Activated B cell treated with CpG ODN at 0.5 μM for 24 hours (primary cell): ENCODE measurements at regions of chr6 and their contacts with region 1.

Region 1: GRCh38 chr6:167141667-167142432 is 15.9 kb downstream of the GPR31 start:
- DNase-seq: peak; percentile 62
- ATAC-seq: peak; percentile 73
- H3K4me3 Mint-ChIP-seq: peak overlapping the region; percentile 46
- H3K27ac Mint-ChIP-seq: peak overlapping the region; percentile 79
- H3K4me1 Mint-ChIP-seq: peaks cover 61% of the 10 kb centered on the region
- H3K27me3 Mint-ChIP-seq: no peaks in the 10 kb centered on the region
- CTCF ChIP-seq: no peak

Region 2: DNA sequence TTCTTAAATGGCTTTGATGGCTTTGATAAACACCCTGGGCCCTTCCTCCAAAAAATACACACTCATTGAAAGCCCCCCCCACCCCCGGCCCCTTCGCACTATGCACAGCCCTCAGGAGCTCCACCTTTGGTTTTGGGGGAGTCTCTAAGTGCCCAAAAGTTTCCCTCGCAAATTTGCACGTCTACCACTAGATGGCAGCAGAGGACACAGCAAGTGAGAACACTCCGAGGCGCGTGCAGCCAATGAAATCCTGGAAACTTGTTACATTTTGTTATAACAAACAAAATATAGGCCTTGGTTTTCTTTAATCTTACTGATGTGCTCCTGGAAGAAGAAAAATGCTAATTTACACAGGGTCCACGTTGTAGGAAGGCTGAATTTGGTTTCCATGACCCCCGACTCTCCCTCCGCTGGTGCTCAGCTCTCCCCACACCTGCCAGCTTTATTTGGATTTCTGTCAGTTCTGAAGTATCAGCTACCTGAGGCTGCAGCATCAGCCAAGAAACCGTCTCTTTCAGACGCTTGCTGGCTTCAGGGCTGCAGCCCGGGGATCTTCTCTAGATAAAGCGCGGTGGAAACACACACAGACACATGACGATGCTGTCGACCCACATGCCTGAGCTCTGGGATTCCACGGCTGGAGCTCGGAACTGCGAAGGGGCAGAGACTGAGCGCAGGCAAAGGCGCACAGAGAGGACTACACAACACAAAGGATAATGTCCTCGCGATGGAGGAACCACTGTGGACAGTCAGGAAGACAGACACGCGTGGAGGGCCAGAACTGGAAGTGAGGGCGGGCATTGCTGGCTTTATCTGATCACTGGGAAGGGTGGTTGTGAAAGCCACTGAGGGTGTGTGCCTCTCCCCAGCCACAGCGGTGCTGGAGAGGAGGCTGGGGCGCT is 366.4 kb before region 1 on chr6:
- CTCF ChIA-PET with region 1: interaction called, 43 read pairs
- POLR2A ChIA-PET with region 1: no interaction called
- intact Hi-C with region 1: loop called (anchors 1 kb)
- DNase-seq: no peak
- ATAC-seq: peak; percentile 60
- H3K4me3 Mint-ChIP-seq: no peak overlapping the region
- H3K27ac Mint-ChIP-seq: no peak overlapping the region
- H3K4me1 Mint-ChIP-seq: no peaks in the 10 kb centered on the region
- H3K27me3 Mint-ChIP-seq: peaks cover 13% of the 10 kb centered on the region
- CTCF ChIP-seq: peak; percentile 45

Region 3: DNA sequence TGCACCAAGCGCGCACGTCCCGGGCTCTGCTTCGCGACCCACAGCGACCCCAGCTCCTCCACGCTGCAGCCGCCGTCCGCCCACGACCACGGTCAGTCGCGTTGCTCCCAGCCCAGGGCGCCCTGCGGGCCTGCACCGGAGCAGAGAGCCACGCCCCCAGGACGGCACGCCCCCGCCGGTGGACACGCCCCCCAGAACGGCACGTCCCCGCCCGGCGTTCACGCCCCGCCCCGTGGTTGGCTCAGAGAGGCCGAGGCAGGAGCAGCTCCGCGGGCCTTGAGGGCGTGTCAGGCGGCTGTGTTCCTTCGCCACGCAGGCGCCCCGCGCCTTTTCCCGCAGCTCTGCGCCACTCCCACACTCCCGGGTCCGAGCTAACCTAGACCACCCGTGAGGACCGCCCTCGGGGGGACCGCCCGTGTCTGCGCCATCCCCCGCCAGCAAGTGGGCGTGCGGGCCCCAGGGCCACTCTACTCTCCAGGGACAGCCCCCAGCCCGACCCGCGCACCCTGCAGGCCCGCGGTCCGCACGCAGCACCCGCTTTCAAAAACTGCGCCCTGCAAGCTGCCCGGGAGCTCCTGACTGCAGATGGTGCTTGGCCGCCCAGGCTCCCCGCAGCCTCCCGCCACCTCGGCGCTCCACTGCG is 185.3 kb before region 1 on chr6 and contains the start of gene RNASET2:
- CTCF ChIA-PET with region 1: interaction called, 10 read pairs
- POLR2A ChIA-PET with region 1: interaction called, 8 read pairs
- intact Hi-C with region 1: loop called (anchors 1 kb)
- DNase-seq: peak; percentile 100
- ATAC-seq: peak; percentile 82
- H3K4me3 Mint-ChIP-seq: peak within 1 kb of the TSS; percentile 91
- H3K27ac Mint-ChIP-seq: peak within 1 kb of the TSS; percentile 100
- H3K4me1 Mint-ChIP-seq: peaks cover 76% of the 10 kb centered on the region
- H3K27me3 Mint-ChIP-seq: no peaks in the 10 kb centered on the region
- CTCF ChIP-seq: no peak
- total RNA-seq, gene RNASET2: 118 and 135 TPM in 2 replicates

Region 4: DNA sequence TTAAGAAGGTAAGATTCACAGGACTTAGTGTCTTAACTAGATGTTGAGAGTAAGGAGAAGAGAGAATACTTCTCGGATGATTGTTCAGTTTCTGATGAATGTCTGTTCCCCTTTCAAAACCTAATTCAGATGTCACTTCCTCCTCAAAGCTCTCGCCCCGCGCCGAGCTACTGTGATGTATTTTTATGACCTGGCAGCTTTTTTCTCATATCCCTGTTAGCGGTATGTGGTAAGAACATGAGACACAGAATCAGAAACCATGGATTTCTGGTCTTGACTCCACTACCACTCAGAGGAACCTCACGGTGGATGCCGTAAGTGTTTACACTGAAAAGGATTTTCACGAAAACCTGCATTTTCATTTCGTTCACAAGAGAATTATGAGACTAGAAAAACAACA is 94.3 kb before region 1 on chr6:
- CTCF ChIA-PET with region 1: interaction called, 23 read pairs
- POLR2A ChIA-PET with region 1: interaction called, 3 read pairs
- intact Hi-C with region 1: no loop called
- DNase-seq: peak; percentile 36
- ATAC-seq: peak; percentile 85
- H3K4me3 Mint-ChIP-seq: peak overlapping the region; percentile 76
- H3K27ac Mint-ChIP-seq: peak overlapping the region; percentile 96
- H3K4me1 Mint-ChIP-seq: peaks cover 68% of the 10 kb centered on the region
- H3K27me3 Mint-ChIP-seq: no peaks in the 10 kb centered on the region
- CTCF ChIP-seq: no peak

Region 5: GRCh38 chr6:167113935-167114910 is 27.6 kb before region 1 on chr6:
- CTCF ChIA-PET with region 1: interaction called, 105 read pairs
- POLR2A ChIA-PET with region 1: interaction called, 688 read pairs
- intact Hi-C with region 1: loop called (anchors 1 kb)
- DNase-seq: peak; percentile 75
- ATAC-seq: peak; percentile 78
- H3K4me3 Mint-ChIP-seq: peak overlapping the region; percentile 84
- H3K27ac Mint-ChIP-seq: peak overlapping the region; percentile 94
- H3K4me1 Mint-ChIP-seq: peaks cover 96% of the 10 kb centered on the region
- H3K27me3 Mint-ChIP-seq: no peaks in the 10 kb centered on the region
- CTCF ChIP-seq: no peak

Region 6: GRCh38 chr6:167130008-167130677 is 11.7 kb before region 1 on chr6:
- CTCF ChIA-PET with region 1: interaction called, 105 read pairs
- POLR2A ChIA-PET with region 1: interaction called, 688 read pairs
- intact Hi-C with region 1: loop called (anchors 1 kb)
- DNase-seq: no peak
- ATAC-seq: peak; percentile 18
- H3K4me3 Mint-ChIP-seq: peak overlapping the region; percentile 55
- H3K27ac Mint-ChIP-seq: peak overlapping the region; percentile 95
- H3K4me1 Mint-ChIP-seq: peaks cover 91% of the 10 kb centered on the region
- H3K27me3 Mint-ChIP-seq: no peaks in the 10 kb centered on the region
- CTCF ChIP-seq: no peak

Region 7: DNA sequence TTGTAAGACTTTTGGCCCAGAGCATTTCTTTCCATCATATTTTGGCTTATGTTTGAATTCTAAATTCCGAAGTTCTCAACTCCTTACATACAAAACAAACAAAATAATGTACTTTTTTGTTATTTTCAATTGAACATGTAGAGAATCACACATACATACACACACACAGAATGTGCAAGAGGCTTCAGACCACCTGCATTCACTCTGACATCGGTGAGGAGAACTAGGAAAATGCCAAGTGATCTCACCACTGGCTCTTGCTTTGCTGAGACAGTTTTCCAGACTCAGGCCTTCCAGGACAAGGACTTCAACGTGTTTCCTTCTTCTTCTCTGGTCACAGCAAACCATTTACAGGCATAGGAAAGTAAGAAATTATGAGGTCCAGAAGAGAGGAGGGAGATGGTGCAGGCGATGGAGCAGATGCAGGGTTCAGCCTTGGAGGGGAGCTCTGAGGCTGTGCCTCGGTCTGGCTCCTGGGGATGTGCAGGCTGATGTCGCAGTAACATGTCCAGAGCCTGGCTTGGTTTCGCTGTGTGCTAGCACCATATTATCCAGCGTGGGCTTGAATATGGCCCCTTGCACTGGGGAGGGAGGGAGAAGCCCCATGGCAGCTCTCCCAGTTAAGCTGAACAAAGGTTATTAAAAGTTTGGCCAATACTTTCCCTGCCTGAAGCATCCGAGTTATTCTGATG is 1084.4 kb after region 1 on chr6:
- CTCF ChIA-PET with region 1: no interaction called
- POLR2A ChIA-PET with region 1: no interaction called
- intact Hi-C with region 1: no loop called
- DNase-seq: no peak
- ATAC-seq: no peak
- H3K4me3 Mint-ChIP-seq: no peak overlapping the region
- H3K27ac Mint-ChIP-seq: no peak overlapping the region
- H3K4me1 Mint-ChIP-seq: no peaks in the 10 kb centered on the region
- H3K27me3 Mint-ChIP-seq: no peaks in the 10 kb centered on the region
- CTCF ChIP-seq: no peak